GM12878 (cell line): ENCODE measurements at regions of chr10 and their contacts with region 1.

Region 1: GRCh38 chr10:18699849-18700840 is 40.9 kb downstream of the ARL5B start:
- DNase-seq: no peak
- ATAC-seq: peak; percentile 50
- H3K4me3 ChIP-seq: no peak overlapping the region
- H3K27ac ChIP-seq: no peak overlapping the region
- H3K4me1 ChIP-seq: no peaks in the 10 kb centered on the region
- H3K27me3 ChIP-seq: no peaks in the 10 kb centered on the region
- CTCF ChIP-seq: no peak
- EP300 ChIP-seq: no peak
- POLR2A ChIP-seq: no peak
- RAD21 ChIP-seq: no peak

Region 2: GRCh38 chr10:20624642-20625041 is 1924.5 kb after region 1 on chr10:
- CTCF ChIA-PET with region 1: no interaction called
- POLR2A ChIA-PET with region 1: no interaction called
- RAD21 ChIA-PET with region 1: no interaction called
- SMC1A ChIA-PET with region 1: no interaction called
- in situ Hi-C with region 1: no loop called
- intact Hi-C with region 1: loop called (anchors 5 kb)
- DNase-seq: no peak
- ATAC-seq: no peak
- H3K4me3 ChIP-seq: no peak overlapping the region
- H3K27ac ChIP-seq: no peak overlapping the region
- H3K4me1 ChIP-seq: no peaks in the 10 kb centered on the region
- H3K27me3 ChIP-seq: no peaks in the 10 kb centered on the region
- CTCF ChIP-seq: no peak
- EP300 ChIP-seq: no peak
- POLR2A ChIP-seq: no peak
- RAD21 ChIP-seq: no peak